ENCODE measurements at regions of chr1 and their contacts with region 1.

Region 1: DNA sequence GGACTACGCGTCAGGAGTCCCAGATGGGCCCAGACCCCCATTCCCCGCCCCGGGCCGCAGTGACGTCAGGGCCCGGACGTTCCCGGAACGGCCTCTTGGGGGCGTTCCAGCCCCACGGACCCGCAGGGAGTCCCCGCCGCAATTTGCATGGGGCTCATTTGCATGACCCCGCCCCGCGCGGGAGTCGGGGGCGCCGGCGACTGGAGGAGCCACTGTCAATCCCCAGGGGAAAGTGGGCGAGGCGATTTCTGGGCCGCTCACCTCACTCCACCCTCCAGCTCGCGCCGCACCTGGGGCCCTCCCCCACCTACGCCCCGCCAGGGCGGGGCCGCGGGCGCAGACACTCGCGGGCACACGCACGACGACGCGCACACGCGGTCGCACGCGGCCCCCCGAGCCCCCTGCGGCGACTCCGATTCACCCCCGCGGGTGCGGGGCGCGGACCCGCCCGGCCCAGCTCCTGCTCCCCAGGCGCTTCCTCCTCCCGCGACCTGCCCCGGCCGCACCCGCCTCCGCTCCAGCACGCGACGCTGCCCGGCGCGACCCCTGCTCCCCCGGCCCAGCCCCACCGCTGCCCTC is 13.2 kb downstream of the AGRN start:
- DNase-seq: peak; percentile 84
- H3K4me3 Mint-ChIP-seq: peak overlapping the region; percentile 37
- H3K27ac Mint-ChIP-seq: no peak overlapping the region
- H3K4me1 Mint-ChIP-seq: no peaks in the 10 kb centered on the region
- H3K27me3 Mint-ChIP-seq: peaks cover 14% of the 10 kb centered on the region

Region 2: GRCh38 chr1:1013105-1013921 is 19.8 kb before region 1 on chr1 and contains the start of gene ISG15:
- intact Hi-C with region 1: loop called (anchors 2 kb)
- DNase-seq: peak; percentile 89
- H3K4me3 Mint-ChIP-seq: peak within 1 kb of the TSS; percentile 89
- H3K27ac Mint-ChIP-seq: peak within 1 kb of the TSS; percentile 96
- H3K4me1 Mint-ChIP-seq: peaks cover 37% of the 10 kb centered on the region
- H3K27me3 Mint-ChIP-seq: peaks cover 5% of the 10 kb centered on the region
- total RNA-seq, gene ISG15: 52.9 and 53.7 TPM in 2 replicates

Region 3: DNA sequence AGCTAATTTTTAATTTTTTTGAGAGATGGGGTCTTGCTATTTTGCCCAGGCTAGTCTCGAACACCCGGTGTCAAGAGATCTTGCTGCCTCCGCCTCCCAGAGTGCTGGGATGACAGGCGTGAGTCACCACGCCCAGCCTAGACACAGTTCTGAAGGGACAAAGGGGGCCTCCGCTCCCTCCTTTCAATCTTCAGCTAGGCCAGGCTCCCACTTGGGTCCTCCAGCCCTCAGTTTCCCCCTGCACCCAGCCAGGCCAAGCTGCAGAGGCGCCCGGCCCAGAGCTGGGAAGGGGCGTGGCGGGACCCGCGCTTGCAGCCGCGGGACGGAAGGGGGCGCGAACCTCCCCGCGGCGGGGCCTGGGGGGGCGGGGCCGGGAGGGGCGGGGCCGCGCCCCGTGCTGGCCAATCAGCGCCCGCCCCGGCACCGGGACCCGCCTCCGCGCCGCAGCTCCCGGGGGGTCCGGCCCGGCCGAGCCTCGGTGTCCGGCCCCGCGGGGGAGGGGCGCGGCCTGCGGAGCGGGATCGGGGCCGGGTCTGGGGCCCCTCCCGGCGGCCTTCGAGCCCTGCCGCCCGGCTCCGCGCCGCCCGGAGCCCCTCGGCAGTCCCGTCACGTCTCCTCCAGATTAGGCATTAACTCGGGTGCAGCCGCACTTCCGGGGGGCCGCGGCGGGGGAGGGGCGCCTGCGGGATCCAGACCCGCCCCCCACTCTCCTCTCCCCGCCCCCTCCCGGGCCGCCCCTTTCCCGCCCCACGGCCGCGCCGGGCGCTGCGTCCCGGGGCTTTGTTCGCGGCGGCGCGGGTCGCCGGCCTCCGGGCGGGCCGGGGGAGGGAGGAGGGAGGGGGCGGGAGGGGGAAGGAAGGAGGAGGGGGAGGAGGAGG is 13.7 kb before region 1 on chr1:
- intact Hi-C with region 1: loop called (anchors 1 kb)
- DNase-seq: peak; percentile 75
- H3K4me3 Mint-ChIP-seq: peak overlapping the region; percentile 70
- H3K27ac Mint-ChIP-seq: no peak overlapping the region
- H3K4me1 Mint-ChIP-seq: peaks cover 18% of the 10 kb centered on the region
- H3K27me3 Mint-ChIP-seq: peaks cover 3% of the 10 kb centered on the region

Region 4: DNA sequence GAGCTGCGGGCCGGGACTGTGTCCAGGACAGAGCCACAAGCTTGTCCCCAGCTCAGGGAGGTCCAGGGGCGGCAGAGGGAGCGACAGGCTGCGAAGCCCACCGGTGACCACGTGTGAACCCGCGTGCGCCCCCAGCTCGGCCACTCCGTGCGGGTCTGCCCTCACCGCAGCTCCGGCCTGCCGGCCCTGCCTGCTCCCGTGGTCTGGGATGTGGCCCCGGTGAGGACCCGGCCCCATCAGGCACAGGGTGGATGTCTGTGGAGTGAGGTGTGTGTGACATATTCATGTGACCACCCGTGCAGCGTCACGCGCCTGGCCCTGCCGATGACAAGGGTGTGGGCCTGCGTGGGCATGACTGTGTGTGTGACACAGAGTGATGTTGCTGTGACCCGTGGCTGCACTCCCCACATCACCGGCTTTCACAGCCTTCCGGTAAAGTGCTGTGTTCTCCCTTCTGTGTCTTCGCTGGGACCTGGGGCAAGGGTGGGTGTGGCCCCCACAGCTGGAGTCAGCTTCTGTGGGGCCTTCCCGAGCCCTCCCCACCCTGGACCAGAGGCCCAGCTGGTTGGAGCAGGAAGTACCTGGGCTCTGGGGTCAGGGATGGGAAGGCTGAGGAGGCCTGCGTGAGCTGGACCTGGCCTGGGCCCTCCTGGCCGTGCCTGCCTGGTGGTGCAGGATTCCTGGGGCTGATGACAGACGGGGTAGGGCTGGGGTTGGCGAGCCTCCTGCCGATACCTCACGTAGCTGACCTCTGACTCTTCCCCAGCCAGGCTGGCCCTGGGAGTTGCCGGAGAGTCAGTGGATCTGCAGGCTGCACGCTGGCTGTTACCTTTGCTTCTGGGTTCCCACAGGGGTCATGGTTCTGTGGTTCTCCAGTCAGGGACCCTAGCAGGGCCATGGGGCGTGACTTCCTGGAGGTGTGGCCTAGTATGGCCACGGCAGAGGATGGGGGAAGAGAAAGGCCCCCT is 36.9 kb after region 1 on chr1:
- intact Hi-C with region 1: no loop called
- DNase-seq: no peak
- H3K4me3 Mint-ChIP-seq: no peak overlapping the region
- H3K27ac Mint-ChIP-seq: no peak overlapping the region
- H3K4me1 Mint-ChIP-seq: peaks cover 7% of the 10 kb centered on the region
- H3K27me3 Mint-ChIP-seq: peaks cover 3% of the 10 kb centered on the region